ENCODE measurements at regions of chr14 and their contacts with region 1.

Region 1: GRCh38 chr14:104752735-104753531 is at the start of gene SIVA1:
- DNase-seq: peak; percentile 99

Region 2: GRCh38 chr14:104514156-104514848 is 238.6 kb before region 1 on chr14:
- CTCF ChIA-PET with region 1: no interaction called
- POLR2A ChIA-PET with region 1: no interaction called
- DNase-seq: no peak

Region 3: GRCh38 chr14:104677512-104678332 is 75.2 kb before region 1 on chr14:
- CTCF ChIA-PET with region 1: no interaction called
- POLR2A ChIA-PET with region 1: interaction called, 14 read pairs
- DNase-seq: peak; percentile 74

Region 4: DNA sequence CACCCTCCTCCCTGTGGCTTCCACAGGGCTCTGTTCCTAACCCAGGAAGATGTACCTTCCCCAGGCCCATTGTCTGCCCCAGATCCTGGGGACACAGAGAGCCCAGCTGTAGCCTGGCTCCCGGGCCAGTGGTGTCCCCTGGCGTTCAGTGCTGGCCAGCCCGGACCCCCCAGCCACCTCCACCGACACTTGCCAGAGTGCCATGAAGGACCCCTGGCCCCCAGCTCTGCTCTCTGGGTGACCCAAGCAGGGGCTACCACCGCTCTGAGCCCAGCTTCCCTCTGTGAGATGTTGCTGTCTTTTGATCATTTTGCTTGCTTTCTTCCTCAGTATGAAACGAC is 57.3 kb before region 1 on chr14:
- CTCF ChIA-PET with region 1: no interaction called
- POLR2A ChIA-PET with region 1: interaction called, 12 read pairs
- DNase-seq: no peak

Region 5: DNA sequence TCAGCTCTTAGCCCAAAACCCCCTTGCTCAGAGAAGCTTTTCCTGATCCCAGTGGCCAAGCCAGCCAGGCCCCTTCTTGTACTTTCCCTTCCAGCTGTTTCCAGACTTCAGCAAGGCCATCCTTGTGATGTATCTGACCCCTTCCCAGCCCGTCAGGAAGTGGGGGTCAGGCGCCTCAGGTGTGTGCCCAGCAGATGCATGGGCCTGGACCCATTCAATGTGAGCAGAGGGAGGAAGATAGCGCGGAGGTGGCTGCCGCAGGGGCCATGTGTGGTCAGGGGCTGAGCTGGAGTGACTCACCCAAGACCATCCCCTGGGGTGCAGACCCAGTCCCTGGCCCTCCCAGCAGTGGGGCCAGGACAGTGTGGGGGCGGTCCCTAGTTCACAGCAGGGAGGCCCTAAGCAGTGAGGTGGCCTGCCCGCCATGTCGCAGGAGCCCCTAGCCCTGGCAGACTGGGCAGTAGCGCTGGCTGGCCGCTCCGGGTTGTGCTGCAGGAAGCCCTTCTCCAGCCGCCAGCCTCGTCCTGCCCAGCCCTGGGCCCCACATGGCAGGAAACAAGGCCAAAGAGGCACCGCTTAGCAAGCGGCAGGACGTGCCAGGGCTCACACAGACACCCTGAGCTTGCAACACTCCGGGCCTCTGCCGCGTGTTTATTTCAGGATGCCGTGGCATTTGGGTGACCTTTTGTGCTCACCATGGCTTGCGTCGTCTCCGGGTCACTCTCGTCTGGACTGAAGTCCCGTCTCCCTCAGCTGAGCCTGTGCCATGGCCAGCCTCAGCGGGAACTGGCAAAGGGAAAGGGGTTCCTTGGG is 16.9 kb before region 1 on chr14:
- CTCF ChIA-PET with region 1: interaction called, 3 read pairs
- POLR2A ChIA-PET with region 1: interaction called, 16 read pairs
- DNase-seq: no peak

Region 6: GRCh38 chr14:104826189-104826860 is 73.4 kb after region 1 on chr14:
- CTCF ChIA-PET with region 1: interaction called, 6 read pairs
- POLR2A ChIA-PET with region 1: interaction called, 12 read pairs
- DNase-seq: peak; percentile 93

Measured in HEK293T (cell line).